ENCODE measurements at regions of chr1 and their contacts with region 1.

Region 1: DNA sequence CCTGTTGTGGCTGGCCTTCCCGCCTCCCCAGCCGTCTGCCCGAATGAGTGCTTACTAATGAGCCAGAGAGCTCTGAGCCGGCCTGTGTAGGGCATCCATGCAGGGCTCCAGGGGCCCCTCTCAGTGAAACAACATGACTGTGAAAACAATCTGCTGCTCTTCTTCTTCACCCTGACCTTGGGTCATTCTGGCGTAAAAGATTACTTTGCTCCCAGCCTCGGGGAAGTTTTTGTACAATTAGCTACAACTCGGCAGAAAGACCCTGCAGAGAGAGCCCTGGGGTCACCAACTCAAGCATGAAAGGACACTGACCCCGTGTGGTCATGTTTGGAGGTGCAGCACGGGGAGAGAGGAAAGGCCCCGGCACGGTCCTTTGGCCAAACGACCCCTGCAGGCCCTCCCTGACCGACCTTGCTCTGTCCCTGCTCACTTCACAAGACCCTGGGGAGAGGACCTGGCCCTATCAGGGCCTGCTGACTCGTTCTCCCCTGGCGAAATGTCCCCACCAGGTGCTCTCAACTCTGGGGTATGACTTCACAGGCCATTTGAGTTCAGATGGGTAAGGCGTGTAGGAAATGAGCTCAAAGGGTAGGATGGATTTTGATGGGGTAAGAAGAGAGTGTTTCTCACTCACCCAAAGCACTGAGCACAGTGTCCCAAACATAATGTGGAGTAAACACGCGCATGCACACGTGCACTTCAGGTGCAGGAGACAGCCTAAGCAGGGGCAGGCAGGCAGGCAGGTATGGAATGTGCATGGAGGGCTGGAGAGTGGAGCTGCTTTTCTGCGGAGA is 22.9 kb upstream of the FAM20B start:
- DNase-seq: peak; percentile 80
- H3K4me3 Mint-ChIP-seq: no peak overlapping the region
- H3K27ac Mint-ChIP-seq: peak overlapping the region; percentile 1
- H3K4me1 Mint-ChIP-seq: peaks cover 4% of the 10 kb centered on the region
- H3K27me3 Mint-ChIP-seq: no peaks in the 10 kb centered on the region
- CTCF ChIP-seq: peak; percentile 100

Region 2: GRCh38 chr1:178532392-178532791 is 470.4 kb before region 1 on chr1:
- CTCF ChIA-PET with region 1: interaction called, 328 read pairs
- POLR2A ChIA-PET with region 1: no interaction called
- intact Hi-C with region 1: loop called (anchors 1 kb)
- DNase-seq: peak; percentile 88
- H3K4me3 Mint-ChIP-seq: no peak overlapping the region
- H3K27ac Mint-ChIP-seq: no peak overlapping the region
- H3K4me1 Mint-ChIP-seq: peaks cover 36% of the 10 kb centered on the region
- H3K27me3 Mint-ChIP-seq: peaks cover 7% of the 10 kb centered on the region
- CTCF ChIP-seq: peak; percentile 99

Region 3: DNA sequence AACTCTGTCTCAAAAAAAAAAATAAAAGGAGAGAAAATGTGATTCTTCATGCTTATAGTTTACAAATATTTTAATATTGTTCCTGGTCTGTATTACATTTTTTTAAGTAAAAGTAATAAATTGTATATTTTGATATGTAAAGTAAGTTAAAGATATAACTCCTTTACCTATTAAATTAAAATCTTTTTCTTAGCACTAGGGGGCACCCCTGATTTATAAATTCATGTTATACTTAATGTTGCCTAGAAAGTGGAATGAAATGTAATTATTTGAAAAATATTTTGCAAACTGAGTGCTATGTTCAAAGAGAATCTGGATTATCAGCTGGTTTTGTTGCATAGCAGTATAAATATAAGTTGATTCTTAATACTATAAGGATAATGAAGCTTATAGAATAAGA is 228.5 kb before region 1 on chr1:
- CTCF ChIA-PET with region 1: interaction called, 220 read pairs
- POLR2A ChIA-PET with region 1: no interaction called
- intact Hi-C with region 1: loop called (anchors 1 kb)
- DNase-seq: peak; percentile 54
- H3K4me3 Mint-ChIP-seq: no peak overlapping the region
- H3K27ac Mint-ChIP-seq: no peak overlapping the region
- H3K4me1 Mint-ChIP-seq: no peaks in the 10 kb centered on the region
- H3K27me3 Mint-ChIP-seq: no peaks in the 10 kb centered on the region
- CTCF ChIP-seq: peak; percentile 55

Region 4: GRCh38 chr1:178806665-178807300 is 196.0 kb before region 1 on chr1:
- CTCF ChIA-PET with region 1: interaction called, 63 read pairs
- POLR2A ChIA-PET with region 1: no interaction called
- intact Hi-C with region 1: no loop called
- DNase-seq: no peak
- H3K4me3 Mint-ChIP-seq: no peak overlapping the region
- H3K27ac Mint-ChIP-seq: no peak overlapping the region
- H3K4me1 Mint-ChIP-seq: peaks cover 8% of the 10 kb centered on the region
- H3K27me3 Mint-ChIP-seq: no peaks in the 10 kb centered on the region
- CTCF ChIP-seq: no peak

Region 5: DNA sequence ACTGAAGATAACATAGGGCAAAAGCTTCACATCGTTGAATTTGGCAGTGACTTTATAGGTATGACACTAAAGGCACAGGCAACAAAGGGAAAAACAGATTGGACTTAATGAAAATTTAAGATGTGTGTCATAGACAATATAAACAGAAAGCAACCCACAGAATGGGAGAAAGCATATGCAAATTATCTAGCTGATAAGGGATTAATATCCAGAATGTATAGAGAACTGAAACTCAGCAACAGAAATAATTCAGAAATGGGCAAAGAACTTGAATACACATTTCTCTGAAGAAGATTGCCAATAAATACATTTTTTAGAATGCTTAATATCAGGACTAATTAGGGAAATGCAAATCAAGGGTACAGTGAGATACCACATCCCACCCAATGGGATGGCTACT is 76.7 kb before region 1 on chr1:
- CTCF ChIA-PET with region 1: interaction called, 10 read pairs
- POLR2A ChIA-PET with region 1: no interaction called
- intact Hi-C with region 1: no loop called
- DNase-seq: no peak
- H3K4me3 Mint-ChIP-seq: no peak overlapping the region
- H3K27ac Mint-ChIP-seq: no peak overlapping the region
- H3K4me1 Mint-ChIP-seq: no peaks in the 10 kb centered on the region
- H3K27me3 Mint-ChIP-seq: no peaks in the 10 kb centered on the region
- CTCF ChIP-seq: no peak

Region 6: DNA sequence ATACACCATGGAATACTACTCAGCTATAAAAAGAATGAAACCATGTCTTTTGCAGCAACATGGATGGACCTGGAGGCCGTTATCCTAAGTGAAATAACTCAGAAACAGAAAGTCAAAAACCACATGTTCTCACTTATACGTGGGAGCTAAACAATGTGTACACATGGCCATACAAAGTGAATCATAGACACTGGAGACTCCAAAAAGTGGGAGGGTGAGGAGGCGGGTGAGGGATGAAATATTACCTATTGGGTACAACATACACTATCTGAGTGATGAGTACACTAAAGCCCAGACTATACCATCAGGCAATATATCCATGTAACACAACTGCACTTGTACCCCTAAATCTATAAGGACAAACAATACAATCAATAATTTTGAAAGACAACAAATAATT is 16.5 kb before region 1 on chr1:
- CTCF ChIA-PET with region 1: interaction called, 15 read pairs
- POLR2A ChIA-PET with region 1: no interaction called
- intact Hi-C with region 1: no loop called
- DNase-seq: no peak
- H3K4me3 Mint-ChIP-seq: no peak overlapping the region
- H3K27ac Mint-ChIP-seq: no peak overlapping the region
- H3K4me1 Mint-ChIP-seq: no peaks in the 10 kb centered on the region
- H3K27me3 Mint-ChIP-seq: no peaks in the 10 kb centered on the region
- CTCF ChIP-seq: no peak

Region 7: GRCh38 chr1:179046808-179047635 is 44.3 kb after region 1 on chr1:
- CTCF ChIA-PET with region 1: interaction called, 10 read pairs
- POLR2A ChIA-PET with region 1: no interaction called
- intact Hi-C with region 1: no loop called
- DNase-seq: no peak
- H3K4me3 Mint-ChIP-seq: no peak overlapping the region
- H3K27ac Mint-ChIP-seq: no peak overlapping the region
- H3K4me1 Mint-ChIP-seq: peaks cover 12% of the 10 kb centered on the region
- H3K27me3 Mint-ChIP-seq: no peaks in the 10 kb centered on the region
- CTCF ChIP-seq: no peak

Region 8: DNA sequence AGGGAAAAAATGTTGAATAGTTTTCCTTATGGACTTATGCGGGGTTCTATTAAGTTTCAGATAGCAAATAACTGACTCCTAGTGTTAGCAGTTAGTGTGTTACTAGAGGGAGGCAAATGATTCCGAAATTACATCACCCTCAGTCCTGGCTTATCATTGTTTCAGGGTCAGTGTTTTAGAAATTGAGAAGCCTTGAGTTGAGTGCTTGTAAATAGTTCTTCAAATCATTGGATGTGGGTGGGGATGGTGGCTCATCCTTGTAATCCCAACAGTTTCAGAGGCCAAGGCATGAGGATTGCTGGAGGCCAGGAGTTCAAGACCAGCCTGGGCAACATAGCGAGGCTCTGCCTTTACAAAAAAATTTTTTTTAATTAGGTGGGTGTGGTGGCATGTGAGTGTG is 312.2 kb after region 1 on chr1:
- CTCF ChIA-PET with region 1: no interaction called
- POLR2A ChIA-PET with region 1: no interaction called
- intact Hi-C with region 1: no loop called
- DNase-seq: no peak
- H3K4me3 Mint-ChIP-seq: no peak overlapping the region
- H3K27ac Mint-ChIP-seq: peak overlapping the region; percentile 26
- H3K4me1 Mint-ChIP-seq: peaks cover 13% of the 10 kb centered on the region
- H3K27me3 Mint-ChIP-seq: no peaks in the 10 kb centered on the region
- CTCF ChIP-seq: no peak